ENCODE measurements at regions of chr2 and their contacts with region 1.

Region 1: GRCh38 chr2:10812362-10813162 is at the start of gene PDIA6:
- DNase-seq: peak; percentile 97
- ATAC-seq: peak; percentile 94
- H3K4me3 Mint-ChIP-seq: peak within 1 kb of the TSS; percentile 89
- H3K27ac Mint-ChIP-seq: peak within 1 kb of the TSS; percentile 90
- H3K4me1 Mint-ChIP-seq: peaks cover 34% of the 10 kb centered on the region
- H3K27me3 Mint-ChIP-seq: peaks cover 1% of the 10 kb centered on the region
- total RNA-seq, gene PDIA6: 123 to 157 TPM

Region 2: DNA sequence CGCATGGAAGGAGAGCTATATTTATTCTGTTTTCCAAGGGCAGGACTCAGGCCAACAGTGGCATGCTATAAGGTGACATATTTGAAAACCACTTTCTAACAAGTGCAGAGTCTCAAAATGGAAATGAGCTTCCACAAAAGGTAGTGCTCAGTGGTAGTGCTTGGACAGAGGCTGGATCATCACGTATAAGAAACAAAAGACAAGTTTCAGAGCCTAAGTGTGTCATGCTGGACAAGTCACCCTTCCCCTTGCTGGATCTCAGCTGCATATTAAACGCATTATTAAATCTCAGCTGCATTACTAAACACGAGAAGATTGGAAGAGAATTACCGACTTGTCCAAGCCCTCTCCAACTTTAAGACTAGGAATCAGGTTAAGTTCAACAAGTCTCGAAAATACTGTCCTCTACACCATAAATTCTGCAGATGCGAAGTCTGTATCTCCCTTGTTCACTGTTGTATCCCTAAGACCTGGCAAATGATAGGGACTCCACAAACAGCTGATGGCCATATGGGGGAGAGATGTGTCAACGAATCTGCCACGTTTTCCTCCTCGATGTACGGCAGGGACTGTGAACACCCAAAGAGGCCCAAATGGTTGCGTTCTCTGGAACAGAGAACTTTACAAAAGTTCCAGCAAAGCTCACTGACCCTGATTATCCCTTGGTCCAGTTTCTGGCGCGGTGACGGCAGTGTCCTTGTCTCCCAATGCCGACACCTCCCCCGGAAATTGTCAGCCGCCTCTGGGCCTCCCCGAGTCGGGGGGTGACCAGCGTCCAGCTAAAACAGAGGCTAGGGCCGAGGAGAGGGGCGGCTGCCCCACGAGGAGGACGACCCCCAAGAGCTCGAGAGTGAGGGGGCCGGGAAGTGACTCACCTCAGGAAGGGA is 123.4 kb before region 1 on chr2:
- CTCF ChIA-PET with region 1: interaction called, 3 read pairs
- POLR2A ChIA-PET with region 1: interaction called, 6 read pairs
- intact Hi-C with region 1: loop called in 1 of 2 experiments (anchors 1 kb)
- DNase-seq: no peak
- ATAC-seq: peak; percentile 19
- H3K4me3 Mint-ChIP-seq: no peak overlapping the region
- H3K27ac Mint-ChIP-seq: no peak overlapping the region
- H3K4me1 Mint-ChIP-seq: peaks cover 7% of the 10 kb centered on the region
- H3K27me3 Mint-ChIP-seq: no peaks in the 10 kb centered on the region

Region 3: DNA sequence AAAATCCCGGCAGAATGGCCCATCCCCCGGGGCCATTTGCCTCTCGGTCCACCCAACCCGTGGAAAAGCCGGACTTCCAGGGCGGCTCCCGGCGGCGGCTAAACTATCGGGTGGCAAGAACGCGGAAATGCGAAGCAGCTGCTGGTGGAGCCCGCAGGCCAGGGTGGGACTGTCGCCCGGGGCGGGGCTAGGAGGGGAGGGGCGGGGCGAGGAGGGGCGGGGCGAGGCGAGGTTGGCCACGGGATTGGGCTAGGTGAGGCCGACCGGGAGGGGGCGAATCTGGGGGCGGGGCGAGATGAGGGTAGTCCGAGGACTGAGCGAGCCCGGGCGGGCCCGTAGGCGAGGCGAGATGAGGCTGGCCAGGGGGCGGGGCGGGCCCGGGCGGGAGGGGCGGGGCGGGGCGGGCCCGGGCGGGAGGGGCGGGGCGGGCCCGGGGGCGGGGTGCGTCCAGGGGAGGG is 342.4 kb after region 1 on chr2:
- CTCF ChIA-PET with region 1: no interaction called
- POLR2A ChIA-PET with region 1: no interaction called
- intact Hi-C with region 1: loop called (anchors 1 kb)
- DNase-seq: peak; percentile 100
- ATAC-seq: peak; percentile 95
- H3K4me3 Mint-ChIP-seq: peak overlapping the region; percentile 73
- H3K27ac Mint-ChIP-seq: peak overlapping the region; percentile 83
- H3K4me1 Mint-ChIP-seq: peaks cover 15% of the 10 kb centered on the region
- H3K27me3 Mint-ChIP-seq: no peaks in the 10 kb centered on the region

Region 4: GRCh38 chr2:11175293-11175795 is 362.8 kb after region 1 on chr2:
- CTCF ChIA-PET with region 1: no interaction called
- POLR2A ChIA-PET with region 1: no interaction called
- intact Hi-C with region 1: no loop called
- DNase-seq: no peak
- ATAC-seq: no peak
- H3K4me3 Mint-ChIP-seq: no peak overlapping the region
- H3K27ac Mint-ChIP-seq: no peak overlapping the region
- H3K4me1 Mint-ChIP-seq: peaks cover 11% of the 10 kb centered on the region
- H3K27me3 Mint-ChIP-seq: no peaks in the 10 kb centered on the region

Region 5: DNA sequence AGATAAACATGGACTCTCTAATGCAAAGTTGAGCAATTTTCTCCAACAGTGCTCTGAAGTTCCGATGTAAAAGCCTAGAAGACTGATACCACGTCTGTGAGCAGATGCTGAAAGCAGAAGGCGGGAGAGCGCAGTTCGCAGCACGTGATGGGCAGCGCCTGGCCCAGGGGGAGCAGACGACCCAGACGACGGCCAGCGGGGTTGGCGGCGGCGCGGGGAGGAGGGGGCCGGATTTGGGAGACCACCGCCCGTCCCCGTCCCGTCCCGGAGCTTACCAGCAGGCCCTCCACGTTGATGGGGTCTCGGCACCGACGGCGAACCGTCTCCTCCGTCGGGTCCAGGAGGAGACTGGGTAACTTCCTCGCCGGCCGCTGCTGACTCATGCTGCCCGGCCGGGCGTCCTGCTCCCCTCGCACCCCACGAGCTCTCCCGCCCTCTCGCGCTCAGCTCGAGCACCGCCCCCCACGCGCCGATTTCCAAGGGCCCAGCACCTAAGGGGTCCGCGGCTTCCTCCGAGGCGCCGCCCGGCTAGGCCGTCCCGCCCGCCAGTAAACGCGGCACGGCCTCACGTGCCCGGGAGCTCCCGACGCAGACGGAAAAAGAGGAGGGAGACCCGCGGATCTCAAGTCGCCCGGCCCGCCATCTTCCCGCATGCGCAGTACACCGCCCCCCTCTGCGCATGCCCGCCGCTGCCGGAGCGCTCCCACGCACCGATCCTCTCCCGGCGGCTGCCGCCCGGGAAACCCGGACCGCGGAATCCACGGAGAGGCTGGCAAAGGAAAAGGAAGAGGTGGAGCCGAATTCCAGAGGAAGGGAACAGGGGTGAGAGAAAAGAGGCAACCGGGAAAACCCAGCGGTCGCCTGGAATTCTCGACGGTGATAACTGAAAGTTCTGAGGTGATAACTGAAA is 653.2 kb after region 1 on chr2 and contains the start of gene E2F6:
- CTCF ChIA-PET with region 1: no interaction called
- POLR2A ChIA-PET with region 1: no interaction called
- intact Hi-C with region 1: loop called in 1 of 2 experiments (anchors 5 kb)
- DNase-seq: peak; percentile 92
- ATAC-seq: peak; percentile 85
- H3K4me3 Mint-ChIP-seq: peak within 1 kb of the TSS; percentile 81
- H3K27ac Mint-ChIP-seq: peak within 1 kb of the TSS; percentile 92
- H3K4me1 Mint-ChIP-seq: peaks cover 33% of the 10 kb centered on the region
- H3K27me3 Mint-ChIP-seq: no peaks in the 10 kb centered on the region
- total RNA-seq, gene E2F6: 7.2 to 10.6 TPM

Measured in activated CD4-positive, alpha-beta T cell treated with anti-CD3 and anti-CD28 coated beads for 36 hours (primary cell).